Activated CD4-positive, alpha-beta T cell treated with anti-CD3 and anti-CD28 coated beads, Interleukin-2, amount 10 ng/mL, durations not matched to agents 24 days and 14 days (primary cell): ENCODE measurements at regions of chr18 and their contacts with region 1.

Region 1: DNA sequence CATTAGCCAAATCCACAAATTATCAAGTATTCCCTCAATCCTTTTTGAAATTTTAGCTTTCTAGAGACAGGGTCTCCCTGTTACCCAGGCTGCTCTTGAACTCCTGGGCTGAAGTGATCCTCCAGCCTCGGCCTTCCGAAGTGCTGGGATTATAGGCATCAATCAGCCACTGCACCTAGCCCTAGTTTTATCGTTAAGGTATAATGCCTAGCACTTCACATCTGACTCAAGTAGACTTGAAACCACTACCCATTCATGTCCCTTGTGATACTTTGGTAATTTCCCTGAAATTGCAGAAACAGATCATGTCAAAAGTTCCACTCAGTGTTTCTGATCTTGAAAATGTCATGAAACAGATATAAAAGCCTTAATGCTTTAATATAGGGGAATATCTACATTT is 26.3 kb downstream of the MEX3C start:
- DNase-seq: peak; percentile 66
- H3K4me3 Mint-ChIP-seq: peak overlapping the region; percentile 69
- H3K27ac Mint-ChIP-seq: peak overlapping the region; percentile 97
- H3K4me1 Mint-ChIP-seq: peaks cover 54% of the 10 kb centered on the region
- H3K27me3 Mint-ChIP-seq: no peaks in the 10 kb centered on the region

Region 2: DNA sequence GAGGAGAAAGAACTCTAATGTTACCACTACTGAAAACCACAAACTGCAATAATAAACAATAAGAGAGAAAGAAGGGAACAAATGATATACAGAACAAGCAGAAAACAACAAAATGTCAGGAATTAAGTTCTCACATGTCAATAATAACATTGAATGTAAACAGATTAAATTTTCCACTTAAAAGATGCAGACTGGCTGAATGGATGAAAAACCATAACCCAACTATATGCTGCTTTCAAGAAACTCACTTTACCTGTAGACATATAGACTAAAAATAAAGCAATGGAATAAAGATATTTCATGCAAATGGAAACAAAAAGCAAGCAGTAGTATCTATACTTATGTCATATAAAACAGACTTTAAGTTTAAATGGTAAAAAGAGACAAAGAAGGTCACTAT is 401.8 kb before region 1 on chr18:
- intact Hi-C with region 1: no loop called
- DNase-seq: no peak
- H3K4me3 Mint-ChIP-seq: no peak overlapping the region
- H3K27ac Mint-ChIP-seq: no peak overlapping the region
- H3K4me1 Mint-ChIP-seq: no peaks in the 10 kb centered on the region
- H3K27me3 Mint-ChIP-seq: peaks cover 2% of the 10 kb centered on the region

Region 3: GRCh38 chr18:51153659-51154371 is 17.4 kb before region 1 on chr18:
- intact Hi-C with region 1: loop called (anchors 1 kb)
- DNase-seq: peak; percentile 86
- H3K4me3 Mint-ChIP-seq: peak overlapping the region; percentile 80
- H3K27ac Mint-ChIP-seq: peak overlapping the region; percentile 99
- H3K4me1 Mint-ChIP-seq: peaks cover 45% of the 10 kb centered on the region
- H3K27me3 Mint-ChIP-seq: no peaks in the 10 kb centered on the region

Region 4: GRCh38 chr18:51188024-51188701 is 16.9 kb after region 1 on chr18:
- intact Hi-C with region 1: loop called (anchors 1 kb)
- DNase-seq: no peak
- H3K4me3 Mint-ChIP-seq: peak overlapping the region; percentile 23
- H3K27ac Mint-ChIP-seq: peak overlapping the region; percentile 78
- H3K4me1 Mint-ChIP-seq: peaks cover 59% of the 10 kb centered on the region
- H3K27me3 Mint-ChIP-seq: no peaks in the 10 kb centered on the region

Region 5: GRCh38 chr18:51211552-51211951 is 40.3 kb after region 1 on chr18:
- intact Hi-C with region 1: loop called (anchors 1 kb)
- DNase-seq: peak; percentile 87
- H3K4me3 Mint-ChIP-seq: no peak overlapping the region
- H3K27ac Mint-ChIP-seq: peak overlapping the region; percentile 44
- H3K4me1 Mint-ChIP-seq: peaks cover 19% of the 10 kb centered on the region
- H3K27me3 Mint-ChIP-seq: no peaks in the 10 kb centered on the region